PC-9 (cell line): ENCODE measurements at regions of chr1 and their contacts with region 1.

Region 1: DNA sequence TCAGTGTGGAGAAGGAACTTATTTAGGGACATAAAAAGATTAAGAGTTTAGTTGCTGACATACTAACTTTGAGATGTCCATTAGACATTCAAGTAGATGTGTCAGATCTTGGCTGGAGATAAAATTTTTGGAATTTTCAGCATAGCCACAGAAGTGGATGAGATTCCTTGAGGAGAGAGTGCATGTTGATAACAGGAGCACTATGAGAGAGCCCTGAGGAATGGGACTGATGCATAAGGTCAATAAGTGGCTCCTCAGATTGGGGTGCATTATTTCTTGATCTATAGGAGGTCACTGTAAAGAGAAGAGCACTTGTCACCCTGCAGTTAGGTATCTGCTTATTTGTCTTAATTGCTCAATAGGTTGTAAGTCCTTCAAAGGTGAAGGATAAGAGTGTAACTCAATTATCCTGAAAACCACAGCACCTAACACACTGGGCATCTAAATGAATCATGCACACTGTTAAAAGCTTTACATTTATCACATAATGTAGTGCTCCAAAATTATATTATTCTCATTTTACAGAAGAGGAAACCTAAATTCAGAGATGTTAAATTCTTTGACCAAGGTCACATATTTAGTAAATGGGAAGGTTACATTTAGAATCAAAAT is 52.0 kb upstream of the TACSTD2 start:
- DNase-seq: peak in 1 of 2 experiments; percentile 89
- H3K4me3 ChIP-seq: no peak overlapping the region
- H3K27ac ChIP-seq: peak overlapping the region; percentile 49
- H3K4me1 ChIP-seq: peaks cover 19% of the 10 kb centered on the region
- H3K27me3 ChIP-seq: no peaks in the 10 kb centered on the region
- CTCF ChIP-seq: no peak

Region 2: GRCh38 chr1:58584082-58584895 is 44.8 kb before region 1 on chr1:
- CTCF ChIA-PET with region 1: no interaction called
- POLR2A ChIA-PET with region 1: interaction called, 5 read pairs
- intact Hi-C with region 1: loop called (anchors 2 kb)
- DNase-seq: peak; percentile 90 to 96
- H3K4me3 ChIP-seq: peak overlapping the region; percentile 36; the same call in 1 of the 2 replicates
- H3K27ac ChIP-seq: peak overlapping the region; percentile 99
- H3K4me1 ChIP-seq: peaks cover 45% of the 10 kb centered on the region
- H3K27me3 ChIP-seq: no peaks in the 10 kb centered on the region
- CTCF ChIP-seq: no peak

Region 3: GRCh38 chr1:58710190-58711085 is 81.3 kb after region 1 on chr1:
- CTCF ChIA-PET with region 1: no interaction called
- POLR2A ChIA-PET with region 1: interaction called, 40 read pairs
- intact Hi-C with region 1: no loop called
- DNase-seq: no peak
- H3K4me3 ChIP-seq: no peak overlapping the region
- H3K27ac ChIP-seq: no peak overlapping the region
- H3K4me1 ChIP-seq: 0 out of 2 replicates have a peak, but pooled peaks cover 5% of the 10 kb centered on the region
- H3K27me3 ChIP-seq: no peaks in the 10 kb centered on the region
- CTCF ChIP-seq: no peak